Right ventricle myocardium inferior (tissue), 1 donor: ENCODE measurements at regions of chr18 and their contacts with region 1.

Region 1: DNA sequence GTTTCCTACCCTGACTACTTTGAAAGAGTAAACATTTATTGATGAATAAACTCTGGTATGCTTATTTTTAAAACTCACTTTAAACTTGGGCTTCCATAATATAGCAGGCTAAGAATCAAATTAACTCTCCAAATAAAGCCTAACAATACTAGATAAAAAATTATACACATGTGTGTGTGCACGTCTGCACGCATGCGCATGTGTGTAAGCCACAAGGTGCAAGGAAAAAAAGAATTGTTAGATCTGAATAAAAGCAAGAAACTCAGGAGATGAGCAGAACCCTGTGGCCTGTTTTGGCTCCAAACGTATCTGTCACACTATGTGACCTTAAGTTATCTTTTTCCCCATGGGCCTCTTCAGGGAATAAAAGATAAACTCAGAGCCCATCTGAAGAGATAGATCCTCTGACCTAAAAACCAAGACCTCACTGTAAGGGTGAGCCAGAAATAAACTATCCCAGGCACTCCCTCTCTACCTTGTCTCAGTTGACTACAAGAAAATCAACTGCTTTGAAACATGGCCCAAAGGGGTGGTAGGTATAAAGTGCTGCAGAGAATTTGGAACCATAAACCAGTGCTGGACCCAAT is 6.3 kb downstream of the HDHD2 start:
- DNase-seq: no peak
- ATAC-seq: peak; percentile 54

Region 2: GRCh38 chr18:47175908-47176575 is 32.0 kb after region 1 on chr18 and contains the start of gene IER3IP1:
- intact Hi-C with region 1: loop called (anchors 5 kb)
- DNase-seq: peak; percentile 92
- ATAC-seq: peak; percentile 96
- total RNA-seq, gene IER3IP1: 9.7 TPM

Region 3: GRCh38 chr18:47274961-47275360 is 131.0 kb after region 1 on chr18:
- intact Hi-C with region 1: no loop called
- DNase-seq: no peak
- ATAC-seq: no peak